ENCODE measurements at regions of chr2 and their contacts with region 1.

Region 1: GRCh38 chr2:68828887-68829708 is 42.1 kb downstream of the BMP10 start:
- DNase-seq: peak; percentile 85
- H3K4me3 Mint-ChIP-seq: peak overlapping the region; percentile 22
- H3K27ac Mint-ChIP-seq: peak overlapping the region; percentile 77
- H3K4me1 Mint-ChIP-seq: peaks cover 60% of the 10 kb centered on the region
- H3K27me3 Mint-ChIP-seq: no peaks in the 10 kb centered on the region

Region 2: DNA sequence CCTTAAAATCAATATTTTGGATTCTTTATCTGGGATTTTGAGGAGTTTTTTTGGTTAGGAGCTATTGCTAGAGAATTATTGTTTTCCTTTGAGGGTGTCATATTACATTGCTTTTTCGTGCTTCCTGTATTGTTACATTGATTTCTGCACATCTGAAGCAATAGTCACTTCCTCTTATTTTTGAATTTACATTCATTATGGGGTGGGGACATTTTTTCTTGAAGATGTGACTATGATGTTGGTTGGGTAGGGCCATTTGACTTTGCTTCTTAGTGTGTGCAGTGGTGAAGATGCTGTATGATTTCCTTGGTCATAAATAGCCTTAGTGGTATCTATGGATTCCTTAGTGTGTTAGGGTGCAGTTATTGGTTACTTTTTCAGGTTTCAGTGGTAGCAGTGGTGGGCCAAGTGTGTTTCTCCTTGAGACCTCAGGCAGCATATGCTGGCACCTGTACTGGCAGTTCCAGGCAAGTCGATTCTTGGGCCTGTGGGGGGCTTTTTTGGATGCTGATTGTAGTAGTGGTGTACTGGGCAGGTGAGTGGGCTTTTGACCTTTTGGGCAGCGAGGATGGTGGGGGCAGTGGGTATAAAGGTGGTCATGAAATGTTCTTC is 32.7 kb before region 1 on chr2:
- CTCF ChIA-PET with region 1: no interaction called
- intact Hi-C with region 1: loop called (anchors 1 kb)
- DNase-seq: peak; percentile 34
- H3K4me3 Mint-ChIP-seq: no peak overlapping the region
- H3K27ac Mint-ChIP-seq: peak overlapping the region; percentile 74
- H3K4me1 Mint-ChIP-seq: peaks cover 76% of the 10 kb centered on the region
- H3K27me3 Mint-ChIP-seq: no peaks in the 10 kb centered on the region

Region 3: GRCh38 chr2:68807821-68808266 is 21.3 kb before region 1 on chr2:
- CTCF ChIA-PET with region 1: interaction called, 7 read pairs
- intact Hi-C with region 1: loop called (anchors 2 kb)
- DNase-seq: peak; percentile 41
- H3K4me3 Mint-ChIP-seq: no peak overlapping the region
- H3K27ac Mint-ChIP-seq: peak overlapping the region; percentile 33
- H3K4me1 Mint-ChIP-seq: peaks cover 27% of the 10 kb centered on the region
- H3K27me3 Mint-ChIP-seq: no peaks in the 10 kb centered on the region